Mammary epithelial cell (primary cell): ENCODE measurements at regions of chr14 and their contacts with region 1.

Region 1: DNA sequence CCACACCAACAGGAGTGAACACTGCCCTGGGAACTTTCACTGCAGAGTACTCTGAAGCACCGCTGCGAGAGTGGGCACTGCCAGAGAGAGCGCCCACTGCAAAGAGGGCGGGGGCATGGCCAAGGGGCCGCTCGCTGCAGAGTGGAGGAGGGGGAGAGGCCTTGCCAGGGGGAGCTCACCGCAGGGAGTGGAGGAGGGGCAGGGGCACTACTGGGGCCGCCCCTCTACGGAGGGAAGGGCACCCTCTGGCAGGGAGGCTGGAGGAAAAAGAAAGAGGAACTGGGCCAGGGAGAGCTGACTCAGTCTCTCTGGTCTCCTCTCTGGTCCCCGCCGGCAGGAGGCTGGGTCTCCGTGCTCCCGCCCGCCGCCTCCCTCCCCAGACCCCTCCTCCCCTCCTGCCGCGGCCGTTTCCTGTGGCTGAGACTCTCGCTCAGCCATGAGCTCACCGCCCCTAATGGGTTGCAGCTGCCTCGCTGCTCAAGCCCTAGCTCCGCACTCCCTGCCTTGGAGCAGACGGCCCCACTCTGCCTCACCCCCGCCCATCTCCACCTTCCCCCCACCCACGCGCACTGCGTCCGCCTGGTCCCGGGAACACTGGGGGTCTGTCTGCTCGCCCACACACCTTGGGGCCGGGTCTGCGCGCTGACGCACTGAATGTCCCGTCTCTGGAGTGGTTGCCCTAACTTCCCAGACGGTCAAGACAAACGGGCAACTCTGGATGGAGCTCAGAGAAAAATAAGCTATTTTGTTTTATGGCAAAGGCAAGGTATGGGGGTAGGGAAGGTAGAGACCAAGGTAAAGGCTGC is 1.3 kb downstream of the ARHGEF40 start:
- DNase-seq: peak; percentile 72
- H3K4me3 ChIP-seq: peak overlapping the region; percentile 68 to 72 (median 72)
- H3K27ac ChIP-seq: no peak overlapping the region
- H3K4me1 ChIP-seq: peaks cover 30% of the 10 kb centered on the region
- H3K27me3 ChIP-seq: no peaks in the 10 kb centered on the region
- CTCF ChIP-seq: no peak

Region 2: GRCh38 chr14:20970983-20971704 is 100.3 kb before region 1 on chr14:
- CTCF ChIA-PET with region 1: interaction called, 12 read pairs
- dilution Hi-C with region 1: no loop called
- in situ Hi-C with region 1: no loop called
- intact Hi-C with region 1: no loop called
- DNase-seq: peak; percentile 74
- H3K4me3 ChIP-seq: peak overlapping the region; percentile 56 to 65 (median 61)
- H3K27ac ChIP-seq: peak overlapping the region; percentile 41
- H3K4me1 ChIP-seq: peaks cover 21% of the 10 kb centered on the region
- H3K27me3 ChIP-seq: no peaks in the 10 kb centered on the region
- CTCF ChIP-seq: peak; percentile 94 to 99

Region 3: DNA sequence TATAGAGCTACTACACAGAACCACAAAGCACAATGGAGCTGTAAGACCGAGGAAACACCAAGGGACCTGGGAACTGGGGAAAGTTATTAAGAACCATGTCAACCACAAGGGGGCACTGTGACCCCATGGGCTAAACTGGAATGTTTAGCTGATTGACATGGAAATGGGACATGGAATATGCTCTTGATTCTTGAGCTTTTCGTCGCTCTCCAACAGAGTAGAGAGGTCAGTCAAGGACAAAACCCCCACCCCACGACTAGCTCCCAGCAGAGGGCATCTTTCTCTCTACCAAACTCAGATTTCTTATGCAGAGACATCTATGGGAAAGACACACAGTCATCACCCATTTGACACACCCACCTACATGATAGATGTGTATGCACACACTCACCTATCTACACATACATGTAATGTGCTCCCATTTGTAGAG is 56.7 kb before region 1 on chr14:
- CTCF ChIA-PET with region 1: interaction called, 7 read pairs
- dilution Hi-C with region 1: no loop called
- in situ Hi-C with region 1: no loop called
- intact Hi-C with region 1: loop called (anchors 2 kb)
- DNase-seq: peak; percentile 68
- H3K4me3 ChIP-seq: no peak overlapping the region
- H3K27ac ChIP-seq: no peak overlapping the region
- H3K4me1 ChIP-seq: no peaks in the 10 kb centered on the region
- H3K27me3 ChIP-seq: no peaks in the 10 kb centered on the region
- CTCF ChIP-seq: peak; percentile 83 to 91

Region 4: DNA sequence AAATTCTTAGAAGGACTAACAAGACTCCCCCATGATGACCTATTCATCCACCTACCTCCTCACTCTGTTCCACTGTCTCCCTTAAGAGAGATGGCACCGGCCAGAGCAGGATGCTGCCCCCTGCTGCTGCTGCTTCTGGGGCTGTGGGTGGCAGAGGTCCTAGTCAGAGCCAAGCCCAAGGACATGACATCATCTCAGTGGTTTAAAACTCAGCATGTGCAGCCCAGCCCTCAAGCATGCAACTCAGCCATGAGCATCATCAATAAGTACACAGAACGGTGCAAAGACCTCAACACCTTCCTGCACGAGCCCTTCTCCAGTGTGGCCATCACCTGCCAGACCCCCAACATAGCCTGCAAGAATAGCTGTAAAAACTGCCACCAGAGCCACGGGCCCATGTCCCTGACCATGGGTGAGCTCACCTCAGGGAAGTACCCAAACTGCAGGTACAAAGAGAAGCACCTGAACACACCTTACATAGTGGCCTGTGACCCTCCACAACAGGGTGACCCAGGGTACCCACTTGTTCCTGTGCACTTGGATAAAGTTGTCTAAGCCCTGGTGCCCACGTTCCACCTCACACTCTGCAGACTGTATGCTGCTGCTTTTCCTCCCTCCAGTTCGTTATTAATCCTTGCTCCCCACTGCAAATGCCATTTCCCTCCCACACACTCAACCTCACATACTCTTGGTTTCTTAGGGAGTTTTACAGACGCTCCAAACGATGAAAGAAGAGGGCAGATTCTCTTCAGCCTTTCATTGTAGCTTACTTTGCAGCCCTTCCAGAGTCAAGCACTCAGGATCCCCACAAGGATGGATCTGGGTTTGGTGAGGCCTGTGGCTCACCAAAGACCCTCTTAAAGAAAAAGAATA is 13.4 kb before region 1 on chr14 and contains the start of gene RNASE8:
- CTCF ChIA-PET with region 1: no interaction called
- dilution Hi-C with region 1: no loop called
- in situ Hi-C with region 1: no loop called
- intact Hi-C with region 1: no loop called
- DNase-seq: peak; percentile 48
- H3K4me3 ChIP-seq: no peak within 1 kb of the TSS
- H3K27ac ChIP-seq: no peak within 1 kb of the TSS
- H3K4me1 ChIP-seq: peaks cover 4% of the 10 kb centered on the region
- H3K27me3 ChIP-seq: no peaks in the 10 kb centered on the region
- CTCF ChIP-seq: no peak
- total RNA-seq, gene RNASE8: not detected

Region 5: GRCh38 chr14:21084988-21085853 is 13.8 kb after region 1 on chr14:
- CTCF ChIA-PET with region 1: interaction called, 19 read pairs
- dilution Hi-C with region 1: no loop called
- in situ Hi-C with region 1: no loop called
- intact Hi-C with region 1: loop called (anchors 2 kb)
- DNase-seq: peak; percentile 59
- H3K4me3 ChIP-seq: no peak overlapping the region
- H3K27ac ChIP-seq: peak overlapping the region; percentile 39
- H3K4me1 ChIP-seq: peaks cover 17% of the 10 kb centered on the region
- H3K27me3 ChIP-seq: no peaks in the 10 kb centered on the region
- CTCF ChIP-seq: no peak

Region 6: DNA sequence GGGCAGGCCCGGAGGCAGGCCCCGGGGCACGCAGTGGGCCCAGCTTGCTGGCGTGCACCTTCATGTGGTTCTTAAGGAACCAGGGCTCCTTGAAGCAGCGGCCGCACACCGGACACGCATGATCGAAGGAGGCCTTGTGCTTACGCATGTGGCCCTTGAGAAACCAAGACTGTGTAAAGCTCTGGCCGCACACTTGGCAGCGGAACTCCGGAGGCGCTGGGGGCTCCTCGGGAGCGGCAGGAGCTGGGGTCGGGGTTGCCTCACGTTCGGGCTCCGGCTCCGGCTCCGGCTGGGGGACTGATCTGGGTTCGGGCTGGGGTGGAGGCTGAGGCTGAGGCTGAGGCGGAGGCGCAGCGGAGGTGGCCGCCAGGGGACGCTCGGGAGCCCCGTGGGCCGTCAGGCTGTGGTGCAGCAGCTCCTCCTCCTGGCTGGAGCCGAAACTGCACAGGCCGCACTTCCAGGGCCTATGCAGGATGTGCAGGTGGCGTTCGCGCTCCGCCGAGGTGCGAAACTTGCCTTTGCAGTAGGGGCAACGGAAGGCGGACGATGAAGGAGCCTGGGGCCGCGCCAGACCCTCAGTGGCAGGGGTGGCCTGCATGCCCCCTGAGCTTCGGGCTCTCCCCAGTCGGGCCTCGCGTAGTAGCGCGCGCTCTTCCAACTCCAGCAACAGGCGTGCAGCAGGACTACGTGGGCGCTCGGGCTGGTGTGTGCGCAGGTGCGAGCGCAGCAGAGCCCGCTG is 21.0 kb after region 1 on chr14:
- CTCF ChIA-PET with region 1: interaction called, 19 read pairs
- dilution Hi-C with region 1: no loop called
- in situ Hi-C with region 1: no loop called
- intact Hi-C with region 1: loop called (anchors 1 kb)
- DNase-seq: peak; percentile 56
- H3K4me3 ChIP-seq: no peak overlapping the region
- H3K27ac ChIP-seq: no peak overlapping the region
- H3K4me1 ChIP-seq: peaks cover 19% of the 10 kb centered on the region
- H3K27me3 ChIP-seq: no peaks in the 10 kb centered on the region
- CTCF ChIP-seq: peak; percentile 100

Region 7: DNA sequence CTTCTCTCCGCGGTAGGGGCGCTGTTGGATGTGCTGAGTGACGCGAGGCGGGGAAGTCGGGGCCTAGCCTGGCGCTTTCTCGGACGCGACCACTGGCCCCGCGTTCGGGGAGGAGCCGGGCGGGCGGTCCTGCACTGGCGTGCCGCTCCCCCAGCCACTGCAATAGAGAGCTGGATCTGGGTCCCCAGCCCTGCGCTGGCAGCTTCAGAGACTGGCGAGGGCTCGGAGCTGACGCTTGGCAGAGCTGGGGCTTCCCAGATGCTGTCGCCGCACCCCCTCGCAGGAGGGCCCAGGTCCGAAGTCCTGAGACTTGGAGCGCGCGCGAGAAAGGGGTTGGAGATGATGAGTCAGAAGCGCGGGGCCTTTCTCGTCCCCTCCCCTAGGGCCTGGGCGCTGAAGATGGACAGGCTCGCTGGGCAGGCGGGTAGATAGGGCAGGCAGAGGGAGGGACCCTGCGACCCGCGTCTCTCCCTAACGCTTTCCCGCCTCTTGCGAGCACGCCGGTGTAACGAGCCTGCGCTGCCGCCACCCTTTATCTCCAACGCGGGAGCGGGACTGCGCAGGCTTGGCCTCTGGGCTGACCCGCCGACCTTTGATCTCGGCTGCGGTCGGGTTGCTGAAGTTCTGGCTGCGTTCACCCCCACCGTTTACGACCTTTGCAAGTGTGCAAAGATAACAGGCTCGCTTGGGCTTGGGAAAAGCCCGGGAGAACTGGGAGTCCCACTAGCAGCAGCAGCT is 32.5 kb after region 1 on chr14:
- CTCF ChIA-PET with region 1: interaction called, 10 read pairs
- dilution Hi-C with region 1: no loop called
- in situ Hi-C with region 1: no loop called
- intact Hi-C with region 1: loop called (anchors 1 kb)
- DNase-seq: peak; percentile 94
- H3K4me3 ChIP-seq: peak overlapping the region; percentile 32 to 85 (median 58)
- H3K27ac ChIP-seq: peak overlapping the region; percentile 86
- H3K4me1 ChIP-seq: peaks cover 62% of the 10 kb centered on the region
- H3K27me3 ChIP-seq: no peaks in the 10 kb centered on the region
- CTCF ChIP-seq: peak; percentile 73 to 86

Region 8: GRCh38 chr14:21136024-21136423 is 64.6 kb after region 1 on chr14:
- CTCF ChIA-PET with region 1: interaction called, 14 read pairs
- dilution Hi-C with region 1: no loop called
- in situ Hi-C with region 1: no loop called
- intact Hi-C with region 1: no loop called
- DNase-seq: no peak
- H3K4me3 ChIP-seq: no peak overlapping the region
- H3K27ac ChIP-seq: no peak overlapping the region
- H3K4me1 ChIP-seq: no peaks in the 10 kb centered on the region
- H3K27me3 ChIP-seq: no peaks in the 10 kb centered on the region
- CTCF ChIP-seq: peak; percentile 62 to 64

Region 9: GRCh38 chr14:21203470-21204166 is 132.2 kb after region 1 on chr14:
- CTCF ChIA-PET with region 1: no interaction called
- dilution Hi-C with region 1: no loop called
- in situ Hi-C with region 1: no loop called
- intact Hi-C with region 1: no loop called
- DNase-seq: no peak
- H3K4me3 ChIP-seq: no peak overlapping the region
- H3K27ac ChIP-seq: no peak overlapping the region
- H3K4me1 ChIP-seq: no peaks in the 10 kb centered on the region
- H3K27me3 ChIP-seq: no peaks in the 10 kb centered on the region
- CTCF ChIP-seq: no peak